WTC11 (cell line): ENCODE measurements at regions of chr6 and their contacts with region 1.

Region 1: DNA sequence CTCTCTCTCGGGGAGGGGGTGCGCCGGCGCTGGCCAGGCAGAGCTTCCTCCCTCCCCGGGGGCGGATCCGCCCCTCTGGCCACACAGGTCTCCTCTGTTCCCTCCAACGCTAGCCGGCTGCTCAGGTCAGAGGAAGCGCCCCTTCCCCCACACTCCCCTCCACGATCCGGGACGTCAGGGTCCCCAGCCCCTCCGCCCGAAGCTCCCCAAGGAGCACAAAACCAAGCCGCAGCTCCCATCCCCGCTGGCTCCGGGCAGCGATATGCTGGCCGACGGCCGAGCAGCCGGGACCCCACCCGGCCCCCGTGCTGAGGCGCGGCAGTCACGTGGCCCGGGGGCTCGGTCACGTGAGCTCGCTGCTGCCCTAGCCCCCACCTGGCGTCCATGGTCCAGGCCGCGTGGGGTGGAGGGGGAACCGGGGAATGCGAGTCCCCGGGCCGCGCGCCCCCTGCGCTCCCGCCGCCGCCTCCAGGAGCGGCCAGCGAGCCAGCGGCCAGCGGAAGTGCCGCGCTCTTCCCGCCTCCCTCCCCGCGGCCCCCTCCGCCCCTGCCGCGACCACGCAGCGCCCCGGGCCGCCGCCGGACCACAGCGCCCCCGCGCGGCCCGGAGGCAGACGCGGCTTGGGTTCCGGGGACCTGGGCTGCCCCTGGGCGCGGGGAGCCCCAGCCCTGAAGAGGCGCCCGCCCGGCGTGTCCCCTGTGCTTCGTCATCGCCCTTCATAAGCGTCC is at the start of gene SLC35B2:
- DNase-seq: peak; percentile 76
- ATAC-seq: peak; percentile 31
- H3K4me3 Mint-ChIP-seq: peak within 1 kb of the TSS; percentile 83
- H3K27ac Mint-ChIP-seq: peak within 1 kb of the TSS; percentile 87
- H3K4me1 Mint-ChIP-seq: peaks cover 27% of the 10 kb centered on the region
- H3K27me3 Mint-ChIP-seq: no peaks in the 10 kb centered on the region
- CTCF ChIP-seq: peak; percentile 75
- total RNA-seq, gene SLC35B2: 28.9 to 36.7 TPM (median 30.8 TPM) in 3 replicates

Region 2: GRCh38 chr6:44221291-44221960 is 35.8 kb before region 1 on chr6:
- CTCF ChIA-PET with region 1: interaction called, 16 read pairs
- POLR2A ChIA-PET with region 1: interaction called, 8 read pairs
- DNase-seq: peak; percentile 70
- ATAC-seq: peak; percentile 5
- H3K4me3 Mint-ChIP-seq: no peak overlapping the region; the same call in none of the 2 replicates
- H3K27ac Mint-ChIP-seq: peak overlapping the region; percentile 95
- H3K4me1 Mint-ChIP-seq: peaks cover 69% of the 10 kb centered on the region
- H3K27me3 Mint-ChIP-seq: no peaks in the 10 kb centered on the region
- CTCF ChIP-seq: peak; percentile 45; the same call in 1 of the 2 replicates

Region 3: GRCh38 chr6:44246663-44247337 is 10.4 kb before region 1 on chr6 and contains the start of gene HSP90AB1:
- CTCF ChIA-PET with region 1: interaction called, 76 read pairs
- POLR2A ChIA-PET with region 1: interaction called, 83 read pairs
- DNase-seq: peak; percentile 93
- ATAC-seq: peak; percentile 59
- H3K4me3 Mint-ChIP-seq: peak within 1 kb of the TSS; percentile 99
- H3K27ac Mint-ChIP-seq: peak within 1 kb of the TSS; percentile 99
- H3K4me1 Mint-ChIP-seq: peaks cover 37% of the 10 kb centered on the region
- H3K27me3 Mint-ChIP-seq: peaks cover 10% of the 10 kb centered on the region
- CTCF ChIP-seq: no peak
- total RNA-seq, gene HSP90AB1: 2,159 to 2,172 TPM (median 2,171 TPM) in 3 replicates

Region 4: GRCh38 chr6:44268095-44268628 is 11.0 kb after region 1 on chr6:
- CTCF ChIA-PET with region 1: interaction called, 23 read pairs
- POLR2A ChIA-PET with region 1: interaction called, 5 read pairs
- DNase-seq: peak; percentile 86
- ATAC-seq: peak; percentile 34
- H3K4me3 Mint-ChIP-seq: 0 out of 2 replicates have a peak overlapping the region, but pooled peaks have one; percentile 3
- H3K27ac Mint-ChIP-seq: no peak overlapping the region
- H3K4me1 Mint-ChIP-seq: peaks cover 48% of the 10 kb centered on the region
- H3K27me3 Mint-ChIP-seq: peaks cover 31% of the 10 kb centered on the region
- CTCF ChIP-seq: peak; percentile 89

Region 5: DNA sequence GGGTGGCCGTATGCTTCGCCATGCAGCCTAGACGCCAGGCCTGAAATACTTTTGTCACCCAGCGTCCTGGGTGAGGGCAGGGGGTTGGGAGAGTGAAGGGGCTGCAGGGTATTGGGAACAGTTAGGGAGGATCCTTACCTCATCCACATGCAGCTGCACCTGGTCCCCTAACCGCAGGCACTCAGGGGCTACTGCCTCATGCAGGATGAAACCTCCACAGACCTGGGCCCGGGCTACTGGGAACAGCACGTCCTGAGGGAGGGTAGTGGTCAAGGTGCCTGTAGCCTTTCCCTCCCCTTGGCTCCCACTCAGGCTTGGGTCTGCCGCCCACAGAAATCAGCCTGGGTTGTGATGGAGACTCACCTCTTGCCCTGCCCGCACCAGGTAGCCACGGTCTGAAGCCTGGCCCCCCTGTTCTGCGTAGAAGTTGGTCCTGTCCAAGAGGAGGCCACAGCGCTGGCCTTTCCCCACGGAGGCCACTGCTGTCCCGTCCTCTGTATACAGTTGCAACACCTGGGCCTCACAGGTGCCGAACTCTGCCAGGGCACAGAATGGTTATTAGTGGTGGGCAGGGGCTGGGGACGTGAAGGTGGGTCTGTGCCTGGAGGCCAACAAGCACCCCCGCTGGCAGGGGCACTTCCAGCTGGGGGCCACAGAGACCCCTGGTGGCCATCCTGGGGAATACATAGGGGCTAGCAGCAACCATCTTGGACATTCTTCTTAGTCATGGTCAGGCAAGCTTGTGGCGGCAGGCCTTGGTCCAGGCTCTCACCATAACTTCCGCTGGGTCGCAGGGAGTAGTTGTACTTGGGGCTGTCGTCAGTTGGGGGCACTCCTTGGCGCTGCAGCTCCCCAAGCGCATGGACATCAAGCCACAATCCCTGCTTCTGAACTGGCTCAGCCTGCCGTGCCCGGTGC is 47.4 kb after region 1 on chr6:
- CTCF ChIA-PET with region 1: interaction called, 11 read pairs
- POLR2A ChIA-PET with region 1: no interaction called
- DNase-seq: peak; percentile 66
- ATAC-seq: peak; percentile 88
- H3K4me3 Mint-ChIP-seq: no peak overlapping the region
- H3K27ac Mint-ChIP-seq: no peak overlapping the region; the same call in 1 of the 2 replicates
- H3K4me1 Mint-ChIP-seq: no peaks in the 10 kb centered on the region
- H3K27me3 Mint-ChIP-seq: no peaks in the 10 kb centered on the region
- CTCF ChIP-seq: peak; percentile 88

Region 6: DNA sequence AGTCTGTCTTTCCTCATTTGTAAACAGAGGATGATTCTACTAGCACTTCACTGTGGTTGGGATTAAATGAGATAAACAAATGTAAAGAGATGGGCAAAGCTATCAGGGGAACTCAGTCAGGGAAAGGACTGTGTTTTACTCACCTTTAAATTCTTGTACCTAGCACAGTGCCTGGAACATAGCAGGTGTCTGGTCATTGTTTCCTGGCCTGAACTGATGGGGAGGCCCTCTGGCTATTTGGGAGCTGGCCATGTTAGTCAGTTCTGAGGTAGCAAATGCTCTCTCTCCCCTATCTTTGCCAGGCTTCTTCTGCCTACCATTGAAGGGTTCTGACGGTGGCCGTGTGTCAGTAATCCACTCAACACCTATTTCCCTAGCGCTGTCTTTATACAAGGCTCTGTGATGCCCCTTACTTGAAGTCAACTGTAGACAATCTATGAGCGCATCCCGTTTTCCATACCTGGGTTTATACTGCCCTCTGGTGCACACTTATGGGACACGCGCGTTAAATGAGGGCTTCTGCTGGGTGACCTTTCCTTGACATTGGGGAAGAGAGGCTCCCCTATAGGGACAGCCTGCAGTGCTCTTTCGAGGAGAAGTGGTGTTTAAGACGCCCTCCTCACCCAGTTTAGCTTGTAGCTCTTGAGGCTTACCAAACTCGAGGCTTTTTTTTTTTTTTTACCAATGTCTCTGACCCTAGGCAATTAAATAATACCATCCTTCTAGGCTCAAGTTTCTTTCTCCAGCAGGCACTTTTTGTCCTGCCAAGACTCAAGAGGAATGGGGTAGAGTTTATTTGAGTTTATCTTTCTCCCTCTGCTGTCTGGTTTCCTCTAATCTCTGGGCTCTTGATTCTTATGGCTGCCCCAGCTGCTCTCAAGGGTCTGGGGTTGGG is 81.3 kb after region 1 on chr6:
- CTCF ChIA-PET with region 1: interaction called, 13 read pairs
- POLR2A ChIA-PET with region 1: no interaction called
- DNase-seq: peak; percentile 78
- ATAC-seq: peak; percentile 89
- H3K4me3 Mint-ChIP-seq: no peak overlapping the region
- H3K27ac Mint-ChIP-seq: no peak overlapping the region
- H3K4me1 Mint-ChIP-seq: peaks cover 28% of the 10 kb centered on the region
- H3K27me3 Mint-ChIP-seq: peaks cover 16% of the 10 kb centered on the region
- CTCF ChIP-seq: peak; percentile 61

Region 7: DNA sequence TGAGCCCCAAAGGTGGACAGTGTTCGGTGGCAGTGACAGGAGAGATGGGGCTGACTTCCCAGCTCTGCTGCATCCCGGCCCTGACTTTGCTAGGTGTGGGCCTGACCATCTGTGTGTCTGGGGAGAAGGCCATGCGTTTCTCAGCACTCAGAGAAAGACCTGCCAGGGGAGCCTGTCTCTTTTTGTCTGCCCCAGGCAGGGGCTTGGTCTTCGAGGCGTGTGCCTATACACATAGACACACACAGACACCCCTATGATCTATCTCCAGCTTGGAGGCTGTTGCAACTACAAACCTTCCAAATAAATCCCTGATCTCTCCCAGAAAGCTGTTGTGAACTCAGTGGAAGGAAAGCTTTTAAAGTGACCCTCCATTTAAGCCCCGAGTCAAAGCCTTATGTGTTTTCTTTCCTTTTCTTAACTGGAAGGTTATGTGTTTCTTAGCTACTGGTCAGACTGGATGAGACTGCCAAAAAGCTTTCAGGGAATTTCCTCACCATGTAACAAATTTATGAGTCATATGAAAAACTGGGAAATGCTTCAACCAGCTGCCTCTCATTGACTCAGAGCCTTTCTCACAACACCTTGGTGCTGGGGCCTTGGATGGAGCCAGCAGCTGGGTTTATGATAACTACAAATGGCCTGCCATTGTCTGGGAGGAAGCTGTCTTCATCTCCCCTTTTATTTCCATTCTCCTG is 232.9 kb after region 1 on chr6:
- CTCF ChIA-PET with region 1: no interaction called
- POLR2A ChIA-PET with region 1: no interaction called
- DNase-seq: no peak
- ATAC-seq: no peak
- H3K4me3 Mint-ChIP-seq: no peak overlapping the region
- H3K27ac Mint-ChIP-seq: no peak overlapping the region
- H3K4me1 Mint-ChIP-seq: peaks cover 26% of the 10 kb centered on the region
- H3K27me3 Mint-ChIP-seq: no peaks in the 10 kb centered on the region
- CTCF ChIP-seq: no peak